HEK293T (cell line): ENCODE measurements at regions of chr4 and their contacts with region 1.

Region 1: GRCh38 chr4:102620697-102621497 is 119.7 kb downstream of the NFKB1 start:
- DNase-seq: peak; percentile 75

Region 2: DNA sequence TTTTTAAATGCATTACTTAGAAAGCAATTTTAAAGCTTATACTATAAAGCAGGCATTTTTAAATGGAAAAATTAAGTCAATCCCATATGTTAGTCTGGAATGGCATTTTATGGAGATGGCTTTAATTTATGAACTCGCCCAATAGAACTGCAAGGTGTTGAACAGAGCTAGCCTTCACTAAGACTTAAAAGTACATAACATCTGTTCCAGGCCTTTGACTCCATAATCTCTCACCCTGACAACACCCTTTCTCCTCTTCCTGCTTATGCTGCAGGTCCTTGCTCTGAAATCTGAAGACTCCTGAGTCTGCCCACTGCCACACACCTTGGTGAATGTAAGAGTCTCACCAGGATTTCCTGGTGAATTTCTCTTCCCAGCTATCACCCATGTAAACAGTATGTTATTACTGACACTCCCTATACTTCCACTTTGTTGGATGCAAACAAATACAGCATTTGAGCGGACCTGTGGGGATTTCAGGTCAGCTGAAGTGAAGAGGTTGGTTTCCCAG is 257.9 kb before region 1 on chr4:
- CTCF ChIA-PET with region 1: no interaction called
- POLR2A ChIA-PET with region 1: no interaction called
- DNase-seq: no peak

Region 3: DNA sequence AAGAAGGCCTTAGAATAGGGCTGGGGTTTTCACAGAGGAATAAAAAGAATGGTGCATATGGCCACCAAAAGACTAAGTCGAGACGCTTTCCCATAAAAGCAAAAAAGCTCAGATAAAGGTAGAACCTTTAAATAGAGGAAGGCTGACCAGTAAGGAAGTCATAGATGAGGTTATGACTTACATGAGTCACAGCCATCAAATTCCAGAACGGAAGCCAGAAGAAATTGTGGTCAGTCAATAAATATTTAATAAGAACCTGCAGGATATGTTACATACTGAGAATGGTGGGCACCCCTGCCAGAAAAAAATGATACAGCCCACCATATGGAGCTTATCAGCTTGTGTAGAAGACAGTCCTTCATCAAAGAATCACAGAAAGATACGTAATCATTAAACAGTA is 19.8 kb after region 1 on chr4:
- CTCF ChIA-PET with region 1: no interaction called
- POLR2A ChIA-PET with region 1: no interaction called
- DNase-seq: no peak

Region 4: DNA sequence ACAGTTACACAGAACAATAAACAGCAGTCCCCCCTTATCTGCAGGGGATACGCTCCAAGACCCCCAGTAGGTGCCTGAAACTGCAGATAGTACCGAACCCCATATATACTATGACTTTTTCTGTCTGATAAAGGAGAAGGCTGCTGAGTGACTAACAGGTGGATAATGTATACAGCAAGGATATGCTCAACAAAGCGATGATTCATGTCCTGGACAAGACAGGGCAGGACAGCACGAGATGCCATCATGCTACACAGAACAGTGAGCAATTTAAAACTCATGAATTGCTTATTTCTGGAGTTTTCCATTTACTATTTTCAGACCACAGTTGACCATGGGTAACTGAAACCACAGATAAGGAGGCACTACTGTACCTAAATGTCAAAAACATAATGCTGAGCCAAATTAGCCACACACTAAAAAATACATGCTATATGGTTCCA is 63.7 kb after region 1 on chr4:
- CTCF ChIA-PET with region 1: no interaction called
- POLR2A ChIA-PET with region 1: no interaction called
- DNase-seq: no peak

Region 5: GRCh38 chr4:102751941-102752340 is 131.0 kb after region 1 on chr4:
- CTCF ChIA-PET with region 1: no interaction called
- POLR2A ChIA-PET with region 1: no interaction called
- DNase-seq: no peak

Region 6: GRCh38 chr4:103008875-103009729 is 388.2 kb after region 1 on chr4:
- CTCF ChIA-PET with region 1: interaction called, 28 read pairs
- POLR2A ChIA-PET with region 1: no interaction called
- DNase-seq: peak; percentile 56